CD8-positive, alpha-beta T cell (primary cell): ENCODE measurements at regions of chr12 and their contacts with region 1.

Region 1: DNA sequence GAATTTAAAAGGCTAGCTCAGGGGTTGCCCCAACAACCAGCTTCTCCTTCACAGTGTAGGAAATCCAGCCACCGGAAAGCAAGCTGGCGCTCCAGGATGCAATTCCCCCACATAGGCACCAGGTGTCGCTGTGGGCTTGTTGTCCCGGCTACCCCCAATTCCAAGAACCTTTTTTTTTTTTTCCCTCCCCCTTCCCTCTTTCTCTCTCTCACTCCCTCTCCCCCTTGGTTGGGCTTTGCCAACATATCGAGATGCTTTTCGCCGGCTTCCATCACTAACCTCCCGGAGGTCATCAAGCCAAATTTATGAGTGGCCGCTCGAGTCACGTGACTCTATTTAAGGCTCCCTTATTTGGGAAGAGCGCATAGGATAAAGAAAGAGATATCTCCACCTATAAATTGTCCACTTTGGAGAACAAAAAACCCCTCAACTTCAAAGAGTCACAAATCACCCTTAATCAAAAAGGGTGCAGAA is at the start of gene HOXC5:
- DNase-seq: peak; percentile 40 to 82 (median 64)
- ATAC-seq: peak; percentile 66
- H3K4me3 ChIP-seq: peak within 1 kb of the TSS; percentile 22 to 35
- H3K4me3 Mint-ChIP-seq: peak within 1 kb of the TSS; percentile 67
- H3K27ac ChIP-seq: no peak within 1 kb of the TSS
- H3K27ac Mint-ChIP-seq: no peak within 1 kb of the TSS
- H3K4me1 ChIP-seq: peaks cover 28% of the 10 kb centered on the region
- H3K4me1 Mint-ChIP-seq: peaks cover 26% of the 10 kb centered on the region
- H3K27me3 ChIP-seq: peaks cover 58 to 61% of the 10 kb centered on the region in 2 experiments
- H3K27me3 Mint-ChIP-seq: peaks cover 72% of the 10 kb centered on the region
- CTCF ChIP-seq: peak; percentile 85
- total RNA-seq, gene HOXC5: not detected

Region 2: DNA sequence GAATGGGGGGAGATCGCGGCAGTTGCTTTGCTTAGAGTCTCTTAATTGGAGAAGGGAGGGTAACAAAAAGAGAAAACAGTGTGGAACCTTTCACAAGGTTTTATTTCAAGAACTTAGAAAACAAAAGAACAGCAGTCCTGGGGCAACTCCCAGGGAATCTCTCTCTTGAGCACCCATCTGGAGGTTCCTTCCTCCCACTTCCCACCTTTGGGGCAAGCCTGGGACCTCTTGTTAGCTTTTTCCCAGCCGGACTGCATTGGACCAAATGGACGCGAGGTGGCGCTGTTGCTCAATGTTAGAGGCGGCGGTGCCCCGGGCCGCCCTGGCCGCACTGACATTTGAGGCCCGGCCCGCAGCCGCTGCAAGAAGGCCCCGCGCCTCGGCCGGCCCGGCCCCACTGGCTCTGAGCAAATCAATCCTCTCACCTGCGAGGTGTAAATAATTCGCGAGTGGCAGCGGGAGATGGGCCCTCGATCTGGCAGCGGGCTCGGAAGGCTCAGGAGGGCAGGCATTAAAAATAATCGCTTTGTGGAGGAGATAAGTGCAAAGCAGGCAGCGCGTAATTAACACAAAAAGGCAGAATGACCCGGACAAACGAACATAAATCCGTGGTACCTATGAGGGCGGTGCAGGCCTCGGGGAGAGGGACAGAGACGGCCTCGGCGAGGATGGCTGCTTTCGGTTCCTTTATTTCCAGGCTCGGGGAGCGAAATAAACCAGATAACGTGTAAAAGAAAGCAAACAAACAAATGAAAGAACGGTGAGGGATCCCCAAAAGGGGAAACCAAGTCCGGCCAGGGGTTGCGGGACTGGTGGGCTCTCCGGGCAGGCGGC is 26.6 kb before region 1 on chr12:
- CTCF ChIA-PET with region 1: interaction called, 9 read pairs
- POLR2A ChIA-PET with region 1: interaction called, 7 read pairs
- intact Hi-C with region 1: loop called (anchors 1 to 2 kb)
- DNase-seq: peak; percentile 71 to 92 (median 86)
- ATAC-seq: peak; percentile 80
- H3K4me3 ChIP-seq: peak overlapping the region; percentile 24 to 62
- H3K4me3 Mint-ChIP-seq: peak overlapping the region; percentile 82
- H3K27ac ChIP-seq: no peak overlapping the region
- H3K27ac Mint-ChIP-seq: no peak overlapping the region
- H3K4me1 ChIP-seq: peaks cover 22% of the 10 kb centered on the region
- H3K4me1 Mint-ChIP-seq: peaks cover 25% of the 10 kb centered on the region
- H3K27me3 ChIP-seq: peaks cover 72 to 85% of the 10 kb centered on the region in 2 experiments
- H3K27me3 Mint-ChIP-seq: peaks cover 87% of the 10 kb centered on the region
- CTCF ChIP-seq: peak; percentile 93

Region 3: GRCh38 chr12:54017878-54018467 is 14.7 kb before region 1 on chr12:
- CTCF ChIA-PET with region 1: interaction called, 34 read pairs
- POLR2A ChIA-PET with region 1: no interaction called
- intact Hi-C with region 1: no loop called
- DNase-seq: peak; percentile 53 to 91 (median 70)
- ATAC-seq: peak; percentile 86
- H3K4me3 ChIP-seq: peak overlapping the region; percentile 69 to 71
- H3K4me3 Mint-ChIP-seq: peak overlapping the region; percentile 83
- H3K27ac ChIP-seq: peak overlapping the region in 1 of 2 experiments; percentile 56
- H3K27ac Mint-ChIP-seq: no peak overlapping the region
- H3K4me1 ChIP-seq: peaks cover 16% of the 10 kb centered on the region
- H3K4me1 Mint-ChIP-seq: peaks cover 22% of the 10 kb centered on the region
- H3K27me3 ChIP-seq: peaks cover 41 to 48% of the 10 kb centered on the region in 2 experiments
- H3K27me3 Mint-ChIP-seq: peaks cover 71% of the 10 kb centered on the region
- CTCF ChIP-seq: no peak

Region 4: GRCh38 chr12:54053751-54054741 is 21.4 kb after region 1 on chr12 and contains the start of gene HOXC4:
- CTCF ChIA-PET with region 1: interaction called, 31 read pairs
- POLR2A ChIA-PET with region 1: interaction called, 3 read pairs
- intact Hi-C with region 1: no loop called
- DNase-seq: peak in 4 of 9 experiments; percentile 34 to 75 (median 54)
- ATAC-seq: peak; percentile 77
- H3K4me3 ChIP-seq: peak within 1 kb of the TSS; percentile 64 to 84
- H3K4me3 Mint-ChIP-seq: peak within 1 kb of the TSS; percentile 82
- H3K27ac ChIP-seq: peak within 1 kb of the TSS; percentile 50 to 89
- H3K27ac Mint-ChIP-seq: peak within 1 kb of the TSS; percentile 47
- H3K4me1 ChIP-seq: peaks cover 33% of the 10 kb centered on the region
- H3K4me1 Mint-ChIP-seq: peaks cover 37% of the 10 kb centered on the region
- H3K27me3 ChIP-seq: peaks cover 23 to 38% of the 10 kb centered on the region in 2 experiments
- H3K27me3 Mint-ChIP-seq: peaks cover 63% of the 10 kb centered on the region
- CTCF ChIP-seq: no peak
- total RNA-seq, gene HOXC4: 0.54 to 0.58 TPM

Region 5: DNA sequence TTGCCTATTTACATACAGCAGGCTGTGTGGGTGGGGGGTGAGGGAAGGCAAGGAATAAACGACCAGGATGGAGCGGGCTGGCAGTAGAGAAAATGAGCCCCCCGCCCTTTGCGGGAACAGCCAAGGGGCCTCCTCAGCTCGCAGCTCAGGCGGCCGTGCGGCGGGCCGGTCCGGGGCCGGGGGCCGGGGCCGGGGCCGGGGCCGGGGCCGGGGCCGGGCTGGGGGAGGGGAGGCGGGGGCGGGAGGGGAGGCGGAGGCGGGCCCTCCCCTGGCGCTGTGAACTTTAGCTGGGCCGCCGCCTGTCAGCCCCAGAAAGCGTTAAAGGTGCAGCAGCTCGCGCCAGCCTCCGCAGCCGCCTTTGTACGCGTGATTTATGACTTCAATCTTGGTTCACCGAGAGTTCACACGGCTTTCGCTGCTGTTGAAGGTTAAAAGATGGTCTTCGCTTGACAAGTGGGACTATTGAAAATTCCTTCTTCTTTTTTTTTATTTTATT is 49.8 kb after region 1 on chr12:
- CTCF ChIA-PET with region 1: no interaction called
- POLR2A ChIA-PET with region 1: no interaction called
- intact Hi-C with region 1: loop called in 1 of 2 experiments (anchors 5 kb)
- DNase-seq: peak; percentile 21 to 74 (median 55)
- ATAC-seq: peak; percentile 42
- H3K4me3 ChIP-seq: peak overlapping the region; percentile 46 to 52
- H3K4me3 Mint-ChIP-seq: peak overlapping the region; percentile 81
- H3K27ac ChIP-seq: peak overlapping the region; percentile 48 to 77
- H3K27ac Mint-ChIP-seq: peak overlapping the region; percentile 93
- H3K4me1 ChIP-seq: peaks cover 10% of the 10 kb centered on the region
- H3K4me1 Mint-ChIP-seq: peaks cover 23% of the 10 kb centered on the region
- H3K27me3 ChIP-seq: no peaks in the 10 kb centered on the region
- H3K27me3 Mint-ChIP-seq: no peaks in the 10 kb centered on the region
- CTCF ChIP-seq: no peak

Region 6: DNA sequence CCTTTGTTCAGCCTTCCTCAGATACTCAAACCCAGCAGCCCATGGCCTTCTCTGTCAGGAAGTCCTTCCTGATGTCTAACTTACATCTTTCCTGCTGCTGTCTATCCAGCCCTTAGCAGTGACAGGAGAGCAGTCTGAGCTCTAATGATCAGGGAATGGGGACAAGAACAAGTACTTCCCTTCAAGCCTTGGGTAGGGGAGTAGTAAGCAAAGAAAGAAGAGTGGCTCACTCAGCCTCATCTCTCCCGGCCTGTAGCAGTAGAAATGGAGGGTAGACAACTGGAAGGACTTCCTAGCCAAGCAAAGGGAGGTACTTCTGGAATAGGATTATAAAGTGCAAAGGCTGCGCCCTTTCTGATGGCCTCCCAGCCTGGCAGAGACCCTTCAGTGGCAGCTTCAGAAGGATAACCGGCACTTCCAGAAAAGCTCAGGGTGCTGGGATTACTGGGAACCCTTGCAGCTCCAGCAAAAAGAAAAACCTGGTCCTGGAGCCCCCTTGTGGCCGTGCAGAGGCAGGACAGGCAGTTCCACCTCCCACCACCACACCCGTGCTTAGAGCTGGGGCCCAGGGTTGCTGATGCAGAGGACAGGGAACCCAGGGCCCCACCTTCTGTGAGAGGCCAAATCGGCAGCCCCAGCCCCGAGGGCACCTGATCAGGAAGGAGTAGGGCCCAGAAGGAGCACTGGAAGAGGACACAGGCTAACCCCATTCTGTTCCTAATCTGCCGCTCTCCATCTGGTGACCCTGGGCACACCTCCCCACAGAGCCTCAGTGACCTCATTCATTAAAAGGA is 168.5 kb after region 1 on chr12:
- CTCF ChIA-PET with region 1: interaction called, 256 read pairs
- POLR2A ChIA-PET with region 1: no interaction called
- intact Hi-C with region 1: loop called in 1 of 2 experiments (anchors 2 kb)
- DNase-seq: peak; percentile 35 to 78 (median 62)
- ATAC-seq: peak; percentile 98
- H3K4me3 ChIP-seq: no peak overlapping the region
- H3K4me3 Mint-ChIP-seq: no peak overlapping the region
- H3K27ac ChIP-seq: no peak overlapping the region
- H3K27ac Mint-ChIP-seq: no peak overlapping the region
- H3K4me1 ChIP-seq: no peaks in the 10 kb centered on the region
- H3K4me1 Mint-ChIP-seq: no peaks in the 10 kb centered on the region
- H3K27me3 ChIP-seq: peaks cover 10 to 24% of the 10 kb centered on the region in 2 experiments
- H3K27me3 Mint-ChIP-seq: peaks cover 70% of the 10 kb centered on the region
- CTCF ChIP-seq: peak; percentile 90

Region 7: GRCh38 chr12:54207484-54208294 is 175.0 kb after region 1 on chr12:
- CTCF ChIA-PET with region 1: interaction called, 256 read pairs
- POLR2A ChIA-PET with region 1: no interaction called
- intact Hi-C with region 1: no loop called
- DNase-seq: peak; percentile 58 to 85 (median 80)
- ATAC-seq: peak; percentile 96
- H3K4me3 ChIP-seq: no peak overlapping the region
- H3K4me3 Mint-ChIP-seq: no peak overlapping the region
- H3K27ac ChIP-seq: no peak overlapping the region
- H3K27ac Mint-ChIP-seq: no peak overlapping the region
- H3K4me1 ChIP-seq: no peaks in the 10 kb centered on the region
- H3K4me1 Mint-ChIP-seq: peaks cover 3% of the 10 kb centered on the region
- H3K27me3 ChIP-seq: peaks cover 0 to 13% of the 10 kb centered on the region in 2 experiments
- H3K27me3 Mint-ChIP-seq: peaks cover 39% of the 10 kb centered on the region
- CTCF ChIP-seq: peak; percentile 85